Gastrocnemius medialis (tissue), 4 donors: ENCODE measurements at regions of chr2 and their contacts with region 1.

Region 1: GRCh38 chr2:221050020-221050795 is 521.9 kb downstream of the EPHA4 start:
- DNase-seq: no peak
- ATAC-seq: no peak
- H3K4me3 ChIP-seq: no peak overlapping the region
- H3K27ac ChIP-seq: no peak overlapping the region
- H3K4me1 ChIP-seq: no peaks in the 10 kb centered on the region
- H3K27me3 ChIP-seq: no peaks in the 10 kb centered on the region
- CTCF ChIP-seq: no peak
- POLR2A ChIP-seq: no peak

Region 2: GRCh38 chr2:221034973-221035372 is 15.2 kb before region 1 on chr2:
- in situ Hi-C with region 1: no loop called
- intact Hi-C with region 1: loop called (anchors 2 kb)
- DNase-seq: no peak
- ATAC-seq: no peak
- H3K4me3 ChIP-seq: no peak overlapping the region
- H3K27ac ChIP-seq: no peak overlapping the region
- H3K4me1 ChIP-seq: no peaks in the 10 kb centered on the region
- H3K27me3 ChIP-seq: no peaks in the 10 kb centered on the region
- CTCF ChIP-seq: no peak
- POLR2A ChIP-seq: no peak

Region 3: DNA sequence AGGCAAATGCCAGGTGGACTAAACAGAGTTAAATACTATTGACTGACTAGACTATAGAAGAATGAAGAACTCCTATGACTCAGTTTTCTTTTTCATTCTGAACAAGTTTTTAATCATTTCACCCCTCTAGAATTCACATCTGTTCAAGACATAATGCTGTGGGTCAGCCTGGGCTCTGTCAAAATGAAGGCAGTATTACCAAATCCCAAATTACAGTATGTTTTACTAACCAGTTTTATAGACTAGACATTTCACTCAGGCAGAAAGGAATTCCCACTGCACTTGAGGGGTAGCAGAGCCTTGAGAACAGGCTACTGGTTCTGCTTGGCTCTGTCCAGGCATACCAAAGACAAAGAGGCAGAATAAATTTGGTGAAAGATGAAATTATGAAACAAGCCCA is 10.2 kb after region 1 on chr2:
- in situ Hi-C with region 1: no loop called
- intact Hi-C with region 1: no loop called
- DNase-seq: no peak
- ATAC-seq: no peak
- H3K4me3 ChIP-seq: no peak overlapping the region
- H3K27ac ChIP-seq: no peak overlapping the region
- H3K4me1 ChIP-seq: no peaks in the 10 kb centered on the region
- H3K27me3 ChIP-seq: no peaks in the 10 kb centered on the region
- CTCF ChIP-seq: no peak
- POLR2A ChIP-seq: no peak